Mammary epithelial cell (primary cell): ENCODE measurements at regions of chr2 and their contacts with region 1.

Region 1: GRCh38 chr2:39107719-39108273 is 13.1 kb downstream of the SOS1 start:
- DNase-seq: no peak
- H3K4me3 ChIP-seq: no peak overlapping the region
- H3K27ac ChIP-seq: no peak overlapping the region
- H3K4me1 ChIP-seq: peaks cover 4% of the 10 kb centered on the region
- H3K27me3 ChIP-seq: no peaks in the 10 kb centered on the region
- CTCF ChIP-seq: no peak

Region 2: GRCh38 chr2:39059366-39059952 is 48.3 kb before region 1 on chr2:
- CTCF ChIA-PET with region 1: no interaction called
- dilution Hi-C with region 1: no loop called
- in situ Hi-C with region 1: no loop called
- intact Hi-C with region 1: no loop called
- DNase-seq: peak; percentile 23
- H3K4me3 ChIP-seq: no peak overlapping the region
- H3K27ac ChIP-seq: no peak overlapping the region
- H3K4me1 ChIP-seq: no peaks in the 10 kb centered on the region
- H3K27me3 ChIP-seq: no peaks in the 10 kb centered on the region
- CTCF ChIP-seq: peak; percentile 61 to 64

Region 3: DNA sequence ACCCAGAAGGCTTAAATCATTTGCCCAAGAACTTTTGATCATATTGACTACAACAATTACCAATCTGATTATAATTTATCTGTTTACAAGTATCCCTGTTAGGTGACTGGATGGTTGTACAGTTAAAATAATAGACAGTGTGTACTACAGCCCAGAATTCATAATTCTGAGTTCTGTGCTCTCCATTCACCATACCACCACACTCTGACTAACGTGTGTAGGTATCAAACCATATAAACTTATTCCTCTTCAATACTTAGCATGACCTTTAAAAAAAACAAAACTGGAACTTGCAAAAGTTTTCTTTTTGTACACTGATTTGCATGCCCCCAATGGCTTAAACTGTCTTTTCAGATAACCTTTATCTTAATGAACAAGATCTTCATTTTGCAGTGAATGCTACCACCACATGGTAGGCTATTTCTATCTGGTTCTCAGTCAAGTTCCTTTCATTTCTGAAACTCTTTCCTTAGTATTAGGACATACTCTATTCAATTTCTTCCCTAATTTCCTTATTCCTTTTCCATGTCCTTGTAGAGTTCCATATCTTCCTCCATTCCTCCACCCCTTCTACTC is 37.8 kb before region 1 on chr2:
- CTCF ChIA-PET with region 1: no interaction called
- dilution Hi-C with region 1: no loop called
- in situ Hi-C with region 1: no loop called
- intact Hi-C with region 1: no loop called
- DNase-seq: no peak
- H3K4me3 ChIP-seq: no peak overlapping the region
- H3K27ac ChIP-seq: no peak overlapping the region
- H3K4me1 ChIP-seq: peaks cover 17% of the 10 kb centered on the region
- H3K27me3 ChIP-seq: no peaks in the 10 kb centered on the region
- CTCF ChIP-seq: no peak

Region 4: DNA sequence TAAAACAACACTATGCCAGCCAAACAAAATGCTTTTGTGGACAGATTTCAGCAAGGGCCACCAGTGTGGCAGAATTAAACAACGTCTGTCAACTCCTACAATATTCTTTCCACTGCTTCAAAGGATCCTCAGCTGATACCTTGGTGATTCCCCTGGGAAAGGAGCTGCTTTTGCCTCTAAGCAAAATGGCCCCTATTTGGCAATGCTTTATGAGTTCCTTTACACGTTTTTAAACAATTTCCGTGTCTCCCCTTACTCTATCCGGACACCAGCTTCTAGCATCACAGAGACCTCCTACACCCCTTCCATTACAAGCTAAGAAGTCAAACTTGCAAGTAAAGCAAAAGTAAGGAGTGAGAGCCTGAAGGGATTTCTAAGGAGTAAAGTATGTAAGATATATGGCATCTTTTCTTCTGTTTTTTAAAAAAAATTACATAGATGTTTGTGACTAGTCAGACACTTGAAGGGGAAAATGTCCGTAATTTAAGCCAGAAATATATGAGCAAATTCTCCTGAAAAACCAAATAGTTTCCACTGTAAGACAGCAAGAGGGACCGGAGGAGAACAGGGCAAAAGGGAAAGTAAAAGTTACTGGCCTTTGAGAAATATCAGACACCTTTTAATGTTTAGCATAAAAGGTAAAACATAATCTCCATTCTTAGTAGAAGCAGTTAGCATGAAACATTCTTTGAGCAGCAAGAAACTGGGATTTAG is 11.1 kb after region 1 on chr2:
- CTCF ChIA-PET with region 1: no interaction called
- dilution Hi-C with region 1: no loop called
- in situ Hi-C with region 1: no loop called
- intact Hi-C with region 1: loop called (anchors 1 kb)
- DNase-seq: peak; percentile 19
- H3K4me3 ChIP-seq: peak overlapping the region; percentile 70 to 77 (median 74)
- H3K27ac ChIP-seq: peak overlapping the region; percentile 81
- H3K4me1 ChIP-seq: peaks cover 25% of the 10 kb centered on the region
- H3K27me3 ChIP-seq: no peaks in the 10 kb centered on the region
- CTCF ChIP-seq: no peak

Region 5: DNA sequence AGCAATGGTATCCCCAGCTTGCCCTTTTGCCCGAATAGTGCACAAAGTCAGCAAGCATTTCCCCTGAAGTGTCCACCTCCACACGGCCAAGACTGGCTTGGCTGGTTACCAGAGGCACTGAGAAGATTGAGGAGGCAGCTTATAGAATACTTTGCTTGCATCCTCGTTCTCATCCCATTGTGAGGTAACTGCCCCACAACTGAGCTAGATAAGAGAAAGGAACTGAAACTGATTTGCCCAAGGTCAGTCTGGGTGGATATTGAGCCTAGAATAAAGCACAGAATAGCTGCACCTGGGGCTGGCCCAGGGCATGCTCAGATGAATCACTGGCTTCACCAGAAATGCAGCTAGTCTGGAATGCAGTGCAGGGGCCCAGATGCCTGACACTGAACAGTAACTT is 362.0 kb after region 1 on chr2:
- CTCF ChIA-PET with region 1: no interaction called
- dilution Hi-C with region 1: no loop called
- in situ Hi-C with region 1: no loop called
- intact Hi-C with region 1: no loop called
- DNase-seq: peak; percentile 55
- H3K4me3 ChIP-seq: peak overlapping the region in 1 of 3 experiments; percentile 22
- H3K27ac ChIP-seq: peak overlapping the region; percentile 66
- H3K4me1 ChIP-seq: peaks cover 21% of the 10 kb centered on the region
- H3K27me3 ChIP-seq: no peaks in the 10 kb centered on the region
- CTCF ChIP-seq: no peak